ENCODE measurements at regions of chr20 and their contacts with region 1.

Region 1: DNA sequence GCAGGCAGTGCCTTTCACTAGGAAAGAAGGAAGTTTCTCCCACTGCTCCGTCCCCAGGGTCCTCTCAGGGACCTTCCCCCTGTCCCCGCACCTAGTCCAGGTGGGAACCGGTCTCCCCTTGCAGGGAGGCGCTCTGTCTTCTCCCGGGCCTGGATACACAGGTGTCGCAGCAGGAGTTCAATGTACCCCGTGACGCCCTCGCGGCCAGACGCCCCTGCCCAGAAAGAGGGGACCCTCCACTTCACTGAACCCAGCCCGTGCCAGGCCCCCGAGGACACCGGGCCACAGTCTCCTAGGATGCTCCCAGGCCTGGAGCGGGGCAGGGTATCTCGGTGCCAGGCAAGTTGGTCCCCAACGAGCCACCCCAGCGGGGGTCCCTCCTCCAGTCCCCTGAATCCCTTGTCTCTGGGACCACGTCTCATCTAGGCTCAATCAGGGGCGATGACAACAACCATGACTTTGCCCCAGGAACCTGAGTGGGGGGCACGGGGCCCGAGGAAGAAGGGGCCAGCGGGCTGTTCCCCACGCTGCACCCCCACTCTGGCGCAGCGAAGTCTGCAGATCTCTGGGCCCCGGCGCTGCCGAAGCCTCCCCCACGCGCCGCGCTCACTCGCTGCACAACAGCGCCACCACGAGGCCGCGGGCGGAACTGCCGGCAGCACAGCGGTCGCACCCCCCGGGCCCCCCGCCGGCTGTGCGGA is 103.0 kb downstream of the EDN3 start:
- DNase-seq: peak; percentile 62
- H3K4me3 ChIP-seq: peak overlapping the region in 2 of 4 donors; percentile 1 to 23
- H3K27ac ChIP-seq: no peak overlapping the region
- H3K4me1 ChIP-seq: peaks cover 7 to 18% (median 11%) of the 10 kb centered on the region in 4 donors
- H3K27me3 ChIP-seq: peaks cover 72% of the 10 kb centered on the region
- CTCF ChIP-seq: peak; percentile 91 to 100 (median 99)
- EP300 ChIP-seq: no peak
- POLR2A ChIP-seq: no peak

Region 2: GRCh38 chr20:58330687-58331086 is 1072.7 kb before region 1 on chr20:
- in situ Hi-C with region 1: no loop called
- intact Hi-C with region 1: no loop called
- DNase-seq: no peak
- H3K4me3 ChIP-seq: no peak overlapping the region
- H3K27ac ChIP-seq: no peak overlapping the region
- H3K4me1 ChIP-seq: peaks cover 0 to 28% (median 5%) of the 10 kb centered on the region in 4 donors
- H3K27me3 ChIP-seq: no peaks in the 10 kb centered on the region
- CTCF ChIP-seq: no peak
- EP300 ChIP-seq: no peak
- POLR2A ChIP-seq: no peak

Region 3: GRCh38 chr20:58855506-58856399 is 547.7 kb before region 1 on chr20:
- in situ Hi-C with region 1: loop called in 3 of 4 experiments (anchors 10 to 25 kb)
- intact Hi-C with region 1: loop called (anchors 2 kb)
- DNase-seq: no peak
- H3K4me3 ChIP-seq: peak overlapping the region in 1 of 4 donors; percentile 43
- H3K27ac ChIP-seq: no peak overlapping the region
- H3K4me1 ChIP-seq: peaks cover 0 to 30% (median 9%) of the 10 kb centered on the region in 4 donors
- H3K27me3 ChIP-seq: peaks cover 99% of the 10 kb centered on the region
- CTCF ChIP-seq: no peak
- EP300 ChIP-seq: no peak
- POLR2A ChIP-seq: no peak

Region 4: GRCh38 chr20:59087829-59088433 is 315.5 kb before region 1 on chr20:
- in situ Hi-C with region 1: loop called (anchors 25 kb)
- intact Hi-C with region 1: no loop called
- DNase-seq: peak; percentile 89
- H3K4me3 ChIP-seq: no peak overlapping the region
- H3K27ac ChIP-seq: no peak overlapping the region
- H3K4me1 ChIP-seq: no peaks in the 10 kb centered on the region
- H3K27me3 ChIP-seq: peaks cover 3% of the 10 kb centered on the region
- CTCF ChIP-seq: peak; percentile 89 to 95 (median 94)
- EP300 ChIP-seq: no peak
- POLR2A ChIP-seq: no peak

Region 5: GRCh38 chr20:59414936-59415623 is 11.7 kb after region 1 on chr20:
- in situ Hi-C with region 1: no loop called
- intact Hi-C with region 1: no loop called
- DNase-seq: no peak
- H3K4me3 ChIP-seq: no peak overlapping the region
- H3K27ac ChIP-seq: no peak overlapping the region
- H3K4me1 ChIP-seq: no peaks in the 10 kb centered on the region
- H3K27me3 ChIP-seq: peaks cover 23% of the 10 kb centered on the region
- CTCF ChIP-seq: no peak
- EP300 ChIP-seq: no peak
- POLR2A ChIP-seq: no peak

Measured in transverse colon (tissue), 4 donors.